Activated B cell treated with CpG ODN at 0.5 μM for 24 hours (primary cell): ENCODE measurements at regions of chr6 and their contacts with region 1.

Region 1: GRCh38 chr6:110815217-110816109 is at the start of gene CDK19:
- DNase-seq: peak; percentile 96
- ATAC-seq: peak; percentile 79
- H3K4me3 Mint-ChIP-seq: peak within 1 kb of the TSS; percentile 96
- H3K27ac Mint-ChIP-seq: peak within 1 kb of the TSS; percentile 96
- H3K4me1 Mint-ChIP-seq: peaks cover 44% of the 10 kb centered on the region
- H3K27me3 Mint-ChIP-seq: no peaks in the 10 kb centered on the region
- CTCF ChIP-seq: no peak
- total RNA-seq, gene CDK19: 27.2 and 31.1 TPM in 2 replicates

Region 2: DNA sequence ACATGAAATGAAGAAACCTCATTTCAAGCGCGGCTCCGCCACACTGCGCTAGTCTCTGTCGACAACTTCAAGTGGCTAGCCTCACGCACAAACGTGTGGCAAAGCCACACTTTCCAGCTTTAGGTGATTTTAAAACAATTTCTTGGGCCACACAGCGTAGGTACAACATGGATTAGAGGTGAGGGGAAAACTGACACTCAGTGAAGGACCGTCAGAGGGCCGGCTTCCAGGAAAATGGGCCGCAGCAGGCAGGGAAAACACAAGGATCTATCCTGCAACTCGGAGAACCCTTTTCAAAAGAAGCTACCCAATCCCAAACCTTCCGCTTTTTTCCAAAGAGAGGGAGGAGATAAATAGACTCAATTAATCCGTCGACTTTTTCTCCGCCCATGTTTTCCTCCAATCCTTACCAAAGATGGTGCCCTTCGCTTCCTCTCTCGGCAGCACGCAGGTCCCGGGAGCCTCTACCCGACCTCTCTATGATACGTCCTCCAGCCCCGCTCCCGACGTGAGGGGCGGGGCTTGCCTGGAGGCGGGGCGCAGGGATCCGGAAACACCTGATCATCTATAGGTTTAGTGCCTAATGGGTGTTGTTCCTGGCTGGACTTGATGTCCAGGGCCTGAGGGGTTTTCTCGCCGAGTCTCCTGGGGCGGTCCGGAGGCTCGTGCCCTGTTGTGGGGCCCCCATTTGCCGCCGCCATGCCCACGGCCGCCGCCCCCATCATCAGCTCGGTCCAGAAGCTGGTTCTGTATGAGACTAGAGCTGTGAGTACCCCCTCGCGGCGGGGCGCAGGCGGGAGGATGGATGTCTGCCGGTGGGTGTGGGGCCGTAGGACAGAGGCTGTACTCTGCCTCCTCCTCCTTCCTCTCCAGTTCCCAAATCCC is 1124.5 kb before region 1 on chr6 and contains the starts of genes AK9 and FIG4:
- CTCF ChIA-PET with region 1: no interaction called
- POLR2A ChIA-PET with region 1: no interaction called
- intact Hi-C with region 1: loop called (anchors 1 kb)
- DNase-seq: peak; percentile 88
- ATAC-seq: peak; percentile 93
- H3K4me3 Mint-ChIP-seq: peak within 1 kb of the TSS; percentile 94
- H3K27ac Mint-ChIP-seq: peak within 1 kb of the TSS; percentile 95
- H3K4me1 Mint-ChIP-seq: peaks cover 42% of the 10 kb centered on the region
- H3K27me3 Mint-ChIP-seq: no peaks in the 10 kb centered on the region
- CTCF ChIP-seq: no peak
- total RNA-seq, gene AK9: 9.1 and 10.6 TPM in 2 replicates
- total RNA-seq, gene FIG4: 19.8 and 21.8 TPM in 2 replicates

Region 3: GRCh38 chr6:110512979-110513378 is 302.5 kb before region 1 on chr6:
- CTCF ChIA-PET with region 1: no interaction called
- POLR2A ChIA-PET with region 1: no interaction called
- intact Hi-C with region 1: no loop called
- DNase-seq: no peak
- ATAC-seq: no peak
- H3K4me3 Mint-ChIP-seq: no peak overlapping the region
- H3K27ac Mint-ChIP-seq: no peak overlapping the region
- H3K4me1 Mint-ChIP-seq: peaks cover 4% of the 10 kb centered on the region
- H3K27me3 Mint-ChIP-seq: peaks cover 6% of the 10 kb centered on the region
- CTCF ChIP-seq: no peak

Region 4: GRCh38 chr6:110682460-110682853 is 133.0 kb before region 1 on chr6:
- CTCF ChIA-PET with region 1: interaction called, 13 read pairs
- POLR2A ChIA-PET with region 1: interaction called, 28 read pairs
- intact Hi-C with region 1: loop called (anchors 1 kb)
- DNase-seq: no peak
- ATAC-seq: peak; percentile 99
- H3K4me3 Mint-ChIP-seq: no peak overlapping the region
- H3K27ac Mint-ChIP-seq: no peak overlapping the region
- H3K4me1 Mint-ChIP-seq: peaks cover 13% of the 10 kb centered on the region
- H3K27me3 Mint-ChIP-seq: no peaks in the 10 kb centered on the region
- CTCF ChIP-seq: no peak

Region 5: GRCh38 chr6:110864824-110865223 is 49.4 kb after region 1 on chr6:
- CTCF ChIA-PET with region 1: interaction called, 5 read pairs
- POLR2A ChIA-PET with region 1: interaction called, 42 read pairs
- intact Hi-C with region 1: no loop called
- DNase-seq: no peak
- ATAC-seq: no peak
- H3K4me3 Mint-ChIP-seq: no peak overlapping the region
- H3K27ac Mint-ChIP-seq: no peak overlapping the region
- H3K4me1 Mint-ChIP-seq: peaks cover 25% of the 10 kb centered on the region
- H3K27me3 Mint-ChIP-seq: no peaks in the 10 kb centered on the region
- CTCF ChIP-seq: no peak

Region 6: DNA sequence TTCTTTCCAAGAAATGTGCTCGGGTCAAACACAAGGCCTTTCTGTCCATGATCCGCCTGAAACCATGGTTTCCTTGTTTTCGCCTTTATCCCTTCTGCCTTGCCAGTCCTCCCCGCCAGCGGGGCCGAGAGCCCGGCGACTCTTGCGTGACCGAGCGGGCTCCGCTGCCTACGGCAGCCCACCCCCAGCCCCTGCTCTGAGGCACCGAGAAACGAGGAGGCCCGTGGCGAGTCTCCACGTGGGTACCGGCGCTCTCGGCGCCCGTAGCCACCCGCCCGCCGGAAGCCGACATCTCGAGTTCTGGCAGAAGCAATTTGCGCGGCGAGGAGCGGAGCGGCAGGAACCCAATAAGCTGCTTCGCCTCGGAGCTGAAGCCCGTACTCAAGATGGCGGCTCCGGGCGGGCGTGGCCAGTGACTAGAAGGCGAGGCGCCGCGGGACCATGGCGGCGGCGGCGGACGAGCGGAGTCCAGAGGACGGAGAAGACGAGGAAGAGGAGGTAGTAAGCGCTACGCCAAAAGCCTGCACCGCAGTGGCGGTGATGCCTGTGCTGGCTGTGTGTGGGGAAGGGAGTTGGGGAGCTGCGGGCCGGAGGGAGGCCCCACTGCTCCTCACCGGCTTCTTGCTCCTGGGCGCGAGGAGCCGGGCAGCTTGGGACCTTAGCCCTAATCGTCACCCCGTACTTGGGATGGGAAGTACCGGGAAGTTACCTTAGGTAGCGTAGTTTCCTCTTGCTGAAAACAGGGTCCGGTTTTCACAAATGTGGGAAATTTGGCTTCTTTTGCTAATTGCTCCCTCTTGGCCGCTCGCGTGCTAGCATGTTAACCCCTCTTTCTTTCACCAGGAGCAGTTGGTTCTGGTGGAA is 143.1 kb after region 1 on chr6 and contains the start of gene GTF3C6:
- CTCF ChIA-PET with region 1: no interaction called
- POLR2A ChIA-PET with region 1: interaction called, 53 read pairs
- intact Hi-C with region 1: loop called (anchors 1 kb)
- DNase-seq: peak; percentile 87
- ATAC-seq: peak; percentile 98
- H3K4me3 Mint-ChIP-seq: peak within 1 kb of the TSS; percentile 97
- H3K27ac Mint-ChIP-seq: peak within 1 kb of the TSS; percentile 98
- H3K4me1 Mint-ChIP-seq: peaks cover 19% of the 10 kb centered on the region
- H3K27me3 Mint-ChIP-seq: no peaks in the 10 kb centered on the region
- CTCF ChIP-seq: no peak
- total RNA-seq, gene GTF3C6: 76.7 and 93.3 TPM in 2 replicates

Region 7: GRCh38 chr6:111483736-111484632 is 668.5 kb after region 1 on chr6:
- CTCF ChIA-PET with region 1: no interaction called
- POLR2A ChIA-PET with region 1: interaction called, 6 read pairs
- intact Hi-C with region 1: loop called (anchors 1 kb)
- DNase-seq: peak; percentile 85
- ATAC-seq: peak; percentile 67
- H3K4me3 Mint-ChIP-seq: peak overlapping the region; percentile 97
- H3K27ac Mint-ChIP-seq: peak overlapping the region; percentile 99
- H3K4me1 Mint-ChIP-seq: peaks cover 37% of the 10 kb centered on the region
- H3K27me3 Mint-ChIP-seq: no peaks in the 10 kb centered on the region
- CTCF ChIP-seq: no peak